ENCODE measurements at regions of chr12 and their contacts with region 1.

Region 1: DNA sequence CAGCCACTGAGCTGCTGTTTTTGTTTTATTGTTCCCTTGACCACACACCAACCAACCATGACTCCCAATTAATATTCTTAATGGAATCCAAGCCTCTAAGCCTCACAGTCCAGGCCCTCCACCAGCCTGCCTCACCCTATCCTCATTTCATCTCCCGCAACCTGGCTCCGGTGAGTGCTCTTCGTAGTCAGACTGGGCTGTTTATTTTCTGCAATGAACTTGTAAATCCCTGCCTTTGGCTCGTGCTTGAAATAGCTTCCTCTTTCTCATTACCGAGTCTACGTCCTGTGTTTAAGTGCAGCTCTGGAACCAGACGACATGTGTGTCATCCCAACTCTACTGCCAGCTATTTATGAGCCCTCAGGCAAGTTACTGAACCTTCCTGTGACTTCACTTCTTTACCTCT is 12.4 kb upstream of the ETFBKMT start:
- DNase-seq: no peak
- ATAC-seq: no peak
- H3K4me3 ChIP-seq: no peak overlapping the region
- H3K27ac ChIP-seq: peak overlapping the region in 1 of 2 experiments; percentile 20; a peak in 1 of 6 replicates
- H3K4me1 ChIP-seq: peaks cover 23% of the 10 kb centered on the region; the same call in 2 of the 3 replicates
- CTCF ChIP-seq: no peak
- EP300 ChIP-seq: no peak
- POLR2A ChIP-seq: no peak
- RAD21 ChIP-seq: no peak

Region 2: GRCh38 chr12:31659087-31659933 is 12.2 kb after region 1 on chr12 and contains the start of gene ETFBKMT:
- CTCF ChIA-PET with region 1: interaction called, 12 read pairs
- POLR2A ChIA-PET with region 1: interaction called, 3 read pairs
- DNase-seq: peak; percentile 85 to 96
- ATAC-seq: peak; percentile 97 to 99
- H3K4me3 ChIP-seq: peak within 1 kb of the TSS; percentile 62
- H3K27ac ChIP-seq: peak within 1 kb of the TSS; percentile 81 to 87
- H3K4me1 ChIP-seq: peaks cover 7% of the 10 kb centered on the region; the same call in 1 of the 3 replicates
- CTCF ChIP-seq: no peak
- EP300 ChIP-seq: no peak
- POLR2A ChIP-seq: 0 out of 2 replicates have a peak, but pooled peaks have one; percentile 27
- RAD21 ChIP-seq: peak in 1 of 2 experiments; percentile 14; a peak in 1 of 5 replicates
- polyA plus RNA-seq, gene ETFBKMT: 1.4 and 1.7 TPM in 2 replicates

Region 3: GRCh38 chr12:31773867-31774266 is 126.8 kb after region 1 on chr12:
- CTCF ChIA-PET with region 1: no interaction called
- POLR2A ChIA-PET with region 1: no interaction called
- DNase-seq: peak in 1 of 2 experiments; percentile 64
- ATAC-seq: peak; percentile 76 to 88
- H3K4me3 ChIP-seq: no peak overlapping the region
- H3K27ac ChIP-seq: peak overlapping the region; percentile 37 to 69
- H3K4me1 ChIP-seq: peaks cover 17% of the 10 kb centered on the region
- CTCF ChIP-seq: no peak
- EP300 ChIP-seq: no peak
- POLR2A ChIP-seq: no peak
- RAD21 ChIP-seq: no peak